T-cell (primary cell): ENCODE measurements at regions of chr3 and their contacts with region 1.

Region 1: GRCh38 chr3:107855708-107856107 is 235.1 kb downstream of the CD47 start:
- DNase-seq: peak in 1 of 35 experiments; percentile 5
- ATAC-seq: no peak
- H3K4me3 ChIP-seq: no peak overlapping the region
- H3K4me3 Mint-ChIP-seq: no peak overlapping the region
- H3K27ac ChIP-seq: no peak overlapping the region
- H3K27ac Mint-ChIP-seq: no peak overlapping the region
- H3K4me1 ChIP-seq: no peaks in the 10 kb centered on the region
- H3K4me1 Mint-ChIP-seq: no peaks in the 10 kb centered on the region
- H3K27me3 ChIP-seq: no peaks in the 10 kb centered on the region
- H3K27me3 Mint-ChIP-seq: no peaks in the 10 kb centered on the region

Region 2: DNA sequence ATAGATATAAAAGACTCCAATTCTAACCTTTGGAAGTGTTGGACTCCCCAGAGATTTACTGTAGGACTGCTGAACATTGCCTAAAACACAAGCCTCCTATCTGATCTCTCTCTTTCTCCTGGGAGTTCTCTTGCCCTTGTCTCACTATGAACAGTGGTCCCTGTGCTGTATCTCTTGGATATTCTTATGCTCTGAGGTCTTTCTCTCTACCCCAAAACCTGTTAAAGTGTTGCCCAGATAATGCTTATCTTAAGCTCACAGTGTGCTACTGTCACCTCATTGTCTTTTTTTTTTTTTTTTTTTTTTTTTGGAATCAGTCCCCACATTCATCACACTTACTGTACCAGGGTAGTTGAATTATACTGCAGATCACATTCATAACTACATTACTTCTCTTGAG is 1855.9 kb before region 1 on chr3:
- CTCF ChIA-PET with region 1: interaction called in 1 of 2 experiments, 11 read pairs
- POLR2A ChIA-PET with region 1: no interaction called
- DNase-seq: no peak
- ATAC-seq: no peak
- H3K4me3 ChIP-seq: no peak overlapping the region
- H3K4me3 Mint-ChIP-seq: no peak overlapping the region
- H3K27ac ChIP-seq: no peak overlapping the region
- H3K27ac Mint-ChIP-seq: no peak overlapping the region
- H3K4me1 ChIP-seq: no peaks in the 10 kb centered on the region
- H3K4me1 Mint-ChIP-seq: peaks cover 8 to 13% (median 8%) of the 10 kb centered on the region in 3 donors
- H3K27me3 ChIP-seq: no peaks in the 10 kb centered on the region
- H3K27me3 Mint-ChIP-seq: no peaks in the 10 kb centered on the region

Region 3: DNA sequence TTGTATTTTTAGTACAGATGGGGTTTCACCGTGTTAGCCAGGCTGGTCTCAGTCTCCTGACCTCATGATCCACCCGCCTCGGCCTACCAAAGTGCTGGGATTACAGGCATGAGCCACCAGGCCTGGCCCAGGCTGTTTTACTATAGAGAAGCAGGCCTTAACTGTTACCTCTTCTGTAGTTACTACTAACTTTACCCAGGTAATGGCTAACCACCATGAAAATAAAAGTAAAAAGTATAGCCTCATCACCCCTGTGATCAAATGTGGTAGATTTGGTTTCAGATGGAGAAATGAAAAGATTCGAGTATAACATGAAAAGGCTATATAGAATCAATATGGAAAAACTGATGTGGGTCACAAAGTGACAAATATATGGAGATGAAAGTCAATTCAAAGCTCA is 25.0 kb after region 1 on chr3:
- CTCF ChIA-PET with region 1: interaction called in 1 of 2 experiments, 5 read pairs
- POLR2A ChIA-PET with region 1: interaction called in 1 of 2 experiments, 13 read pairs
- DNase-seq: no peak
- ATAC-seq: no peak
- H3K4me3 ChIP-seq: no peak overlapping the region
- H3K4me3 Mint-ChIP-seq: no peak overlapping the region
- H3K27ac ChIP-seq: no peak overlapping the region
- H3K27ac Mint-ChIP-seq: no peak overlapping the region
- H3K4me1 ChIP-seq: no peaks in the 10 kb centered on the region
- H3K4me1 Mint-ChIP-seq: no peaks in the 10 kb centered on the region
- H3K27me3 ChIP-seq: no peaks in the 10 kb centered on the region
- H3K27me3 Mint-ChIP-seq: no peaks in the 10 kb centered on the region